Esophagus muscularis mucosa (tissue), 4 donors: ENCODE measurements at regions of chr10 and their contacts with region 1.

Region 1: GRCh38 chr10:86521678-86522509 is at the start of gene WAPL:
- DNase-seq: peak; percentile 98
- H3K4me3 ChIP-seq: peak within 1 kb of the TSS; percentile 75 to 96 (median 80)
- H3K27ac ChIP-seq: peak within 1 kb of the TSS; percentile 93 to 99 (median 95)
- H3K4me1 ChIP-seq: peaks cover 43 to 71% (median 63%) of the 10 kb centered on the region in 4 donors
- H3K27me3 ChIP-seq: no peaks in the 10 kb centered on the region
- CTCF ChIP-seq: no peak
- EP300 ChIP-seq: no peak
- POLR2A ChIP-seq: peak; percentile 60
- total RNA-seq, gene WAPL: 34.2 to 40.5 (median 39.3) TPM

Region 2: DNA sequence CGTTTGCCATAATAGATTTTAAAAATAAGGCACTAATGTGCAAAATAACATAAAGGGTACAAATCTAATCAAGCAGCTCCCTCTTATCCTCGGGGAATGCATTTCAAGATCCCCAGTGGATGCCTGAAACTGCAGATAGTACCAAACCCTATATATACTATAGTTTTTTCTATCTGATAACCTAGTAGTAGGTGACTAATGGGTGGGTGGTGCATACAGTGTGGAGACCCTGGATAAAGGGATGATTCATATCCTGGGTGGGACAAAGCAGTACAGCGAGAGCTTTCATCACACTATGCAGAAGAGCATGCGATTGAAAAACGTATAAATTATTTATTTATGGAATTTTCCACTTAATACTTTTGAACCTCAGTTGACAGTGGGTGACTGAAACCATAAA is 619.8 kb before region 1 on chr10:
- intact Hi-C with region 1: no loop called
- DNase-seq: no peak
- H3K4me3 ChIP-seq: no peak overlapping the region
- H3K27ac ChIP-seq: no peak overlapping the region
- H3K4me1 ChIP-seq: no peaks in the 10 kb centered on the region
- H3K27me3 ChIP-seq: no peaks in the 10 kb centered on the region
- CTCF ChIP-seq: no peak
- EP300 ChIP-seq: no peak
- POLR2A ChIP-seq: no peak

Region 3: DNA sequence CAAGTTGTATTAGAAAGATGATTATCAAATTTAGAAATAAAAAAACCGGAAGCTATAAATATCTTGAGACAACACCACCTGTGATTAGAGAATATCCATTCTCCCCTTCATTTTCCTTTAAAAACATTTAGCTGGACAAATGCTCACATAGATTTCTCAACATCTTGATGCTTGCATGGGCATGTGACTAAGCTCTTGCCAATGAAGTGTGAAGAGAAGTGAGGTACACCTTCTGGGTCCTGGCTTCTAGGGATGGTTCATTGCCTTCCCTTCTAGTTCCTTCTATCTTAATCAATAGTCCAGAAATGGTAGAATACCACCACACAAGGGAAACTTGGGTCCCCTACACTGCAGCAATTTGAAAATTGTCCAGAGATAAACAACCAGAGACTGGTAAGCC is 41.3 kb before region 1 on chr10:
- intact Hi-C with region 1: no loop called
- DNase-seq: no peak
- H3K4me3 ChIP-seq: no peak overlapping the region
- H3K27ac ChIP-seq: no peak overlapping the region
- H3K4me1 ChIP-seq: no peaks in the 10 kb centered on the region
- H3K27me3 ChIP-seq: no peaks in the 10 kb centered on the region
- CTCF ChIP-seq: no peak
- EP300 ChIP-seq: no peak
- POLR2A ChIP-seq: no peak

Region 4: DNA sequence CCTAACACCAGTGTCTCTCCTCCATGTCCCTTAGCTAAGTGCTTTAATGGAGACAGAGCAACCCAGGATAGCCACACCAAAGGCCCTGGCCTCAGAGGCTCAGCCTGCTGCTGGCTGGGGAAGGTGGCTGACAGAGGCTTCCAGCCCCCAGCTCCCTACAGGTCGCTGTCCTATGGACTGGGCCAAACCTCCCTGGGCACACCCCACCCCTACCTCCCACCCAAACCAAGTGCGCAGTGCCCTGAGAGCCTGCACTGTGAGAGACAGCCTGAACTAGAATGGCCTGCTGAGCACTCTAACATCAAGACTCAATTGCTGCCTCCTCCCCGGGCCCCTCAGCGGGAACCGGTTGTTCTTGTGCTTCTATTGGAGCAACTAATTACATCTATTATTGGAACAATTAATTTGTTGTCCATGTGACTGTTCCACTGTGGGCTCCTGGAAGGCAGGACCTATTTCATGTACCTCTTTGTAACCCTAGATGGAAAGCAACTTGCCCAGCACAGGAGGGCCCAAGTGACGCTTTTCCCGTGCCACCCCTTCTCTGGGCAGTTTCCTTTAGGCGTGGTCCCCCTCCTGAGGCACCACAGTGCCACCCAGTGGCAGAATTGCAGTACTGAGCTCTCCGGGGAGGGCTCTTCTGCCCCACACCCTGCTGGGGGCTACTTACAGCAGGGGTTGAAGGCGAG is 63.3 kb after region 1 on chr10:
- intact Hi-C with region 1: loop called (anchors 5 kb)
- DNase-seq: no peak
- H3K4me3 ChIP-seq: no peak overlapping the region
- H3K27ac ChIP-seq: peak overlapping the region in 1 of 4 donors; percentile 24
- H3K4me1 ChIP-seq: peaks cover 8 to 12% (median 9%) of the 10 kb centered on the region in 4 donors
- H3K27me3 ChIP-seq: no peaks in the 10 kb centered on the region
- CTCF ChIP-seq: peak in 2 of 3 experiments; percentile 92
- EP300 ChIP-seq: no peak
- POLR2A ChIP-seq: no peak

Region 5: GRCh38 chr10:86684331-86685097 is 162.6 kb after region 1 on chr10:
- intact Hi-C with region 1: loop called (anchors 5 kb)
- DNase-seq: no peak
- H3K4me3 ChIP-seq: no peak overlapping the region
- H3K27ac ChIP-seq: peak overlapping the region; percentile 84 to 91 (median 86)
- H3K4me1 ChIP-seq: peaks cover 77 to 100% (median 93%) of the 10 kb centered on the region in 4 donors
- H3K27me3 ChIP-seq: no peaks in the 10 kb centered on the region
- CTCF ChIP-seq: peak; percentile 40 to 65 (median 60)
- EP300 ChIP-seq: no peak
- POLR2A ChIP-seq: no peak